ENCODE measurements at regions of chr3 and their contacts with region 1.

Region 1: DNA sequence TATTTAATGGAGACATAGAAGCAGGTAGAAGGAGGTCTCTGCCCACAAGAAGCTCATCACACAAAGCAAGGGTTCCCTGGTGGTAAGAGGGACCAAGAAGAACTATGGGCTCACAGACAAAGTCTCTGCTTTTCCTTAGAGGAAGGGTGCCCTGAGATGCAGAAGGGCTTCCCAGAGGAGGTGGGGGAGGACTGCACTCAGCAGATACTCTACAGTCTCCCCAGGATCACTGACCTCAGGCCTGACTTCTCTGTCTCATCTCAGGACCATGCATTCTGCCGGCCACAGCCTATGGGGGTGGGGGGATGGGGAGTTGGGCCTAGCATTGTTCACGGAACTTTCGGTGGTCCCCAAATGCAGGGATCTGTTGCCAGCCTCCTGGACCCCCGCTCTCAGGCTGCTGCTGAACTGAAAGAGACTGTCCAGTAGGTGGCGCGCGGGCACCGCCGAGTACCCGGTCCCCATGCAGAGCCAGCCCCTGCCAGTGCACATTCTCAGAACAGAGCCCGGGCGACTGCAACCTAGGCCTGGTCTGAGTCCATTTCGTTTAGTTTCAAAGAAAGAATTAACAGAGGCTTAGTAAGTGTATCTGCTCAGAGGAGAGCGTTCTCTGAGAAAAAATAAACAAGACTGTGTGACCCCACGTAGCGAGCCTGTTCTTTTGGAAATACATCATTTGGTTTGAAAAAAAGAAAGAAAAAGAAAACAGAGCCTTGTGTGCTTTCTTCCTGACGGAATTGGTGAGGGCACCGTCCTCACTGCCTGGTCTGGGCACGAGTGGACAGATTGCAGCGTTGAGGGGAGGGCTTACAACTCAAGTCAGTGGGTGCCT is 74.1 kb downstream of the LRTM1 start:
- DNase-seq: peak; percentile 25 to 70
- ATAC-seq: peak; percentile 91 to 98
- H3K4me3 ChIP-seq: no peak overlapping the region
- H3K27ac ChIP-seq: no peak overlapping the region
- H3K4me1 ChIP-seq: no peaks in the 10 kb centered on the region
- CTCF ChIP-seq: peak; percentile 65
- EP300 ChIP-seq: no peak
- POLR2A ChIP-seq: no peak
- RAD21 ChIP-seq: peak; percentile 81 to 86

Region 2: DNA sequence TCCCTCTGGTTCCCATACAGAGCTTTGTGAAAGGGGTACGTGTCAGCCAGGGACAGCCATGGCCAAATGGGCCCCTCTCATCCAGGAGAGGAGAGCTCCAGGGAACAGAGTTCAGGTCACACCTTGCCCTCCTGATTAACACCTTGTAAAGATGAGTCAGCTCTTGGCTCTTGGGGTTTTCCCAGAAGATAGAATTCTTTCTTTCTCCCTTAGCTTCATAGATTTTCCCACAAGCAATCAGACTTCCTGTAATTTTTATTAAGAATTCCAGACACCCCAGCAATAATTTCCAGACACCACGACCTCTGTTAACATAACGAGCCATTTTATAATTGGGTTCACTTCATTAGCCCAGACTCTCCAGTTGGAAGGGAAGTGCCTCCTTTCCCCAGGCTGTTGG is 12.3 kb before region 1 on chr3:
- CTCF ChIA-PET with region 1: interaction called, 10 read pairs
- POLR2A ChIA-PET with region 1: no interaction called
- DNase-seq: no peak
- ATAC-seq: no peak
- H3K4me3 ChIP-seq: no peak overlapping the region
- H3K27ac ChIP-seq: no peak overlapping the region
- H3K4me1 ChIP-seq: no peaks in the 10 kb centered on the region
- CTCF ChIP-seq: no peak
- EP300 ChIP-seq: no peak
- POLR2A ChIP-seq: no peak
- RAD21 ChIP-seq: no peak

Region 3: DNA sequence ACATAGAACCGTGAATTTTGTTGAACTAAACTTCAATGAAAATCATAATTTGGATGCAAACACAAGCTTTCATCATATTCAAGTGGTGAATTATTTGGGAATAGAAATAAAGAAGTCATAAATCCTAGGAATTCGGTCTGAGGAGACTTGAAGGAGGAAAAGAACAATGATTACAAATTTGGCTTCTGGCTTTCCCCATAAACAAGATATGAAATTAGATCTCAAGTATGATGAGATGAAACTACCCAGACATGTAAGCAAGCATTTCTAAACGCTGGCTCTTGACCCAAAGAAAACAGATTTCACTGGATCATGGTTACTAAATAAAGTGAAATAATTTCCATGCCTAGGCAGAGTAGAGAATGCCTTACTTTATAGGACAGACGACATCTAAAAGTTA is 221.0 kb after region 1 on chr3:
- CTCF ChIA-PET with region 1: no interaction called
- POLR2A ChIA-PET with region 1: no interaction called
- DNase-seq: no peak
- ATAC-seq: no peak
- H3K4me3 ChIP-seq: no peak overlapping the region
- H3K27ac ChIP-seq: no peak overlapping the region
- H3K4me1 ChIP-seq: no peaks in the 10 kb centered on the region
- CTCF ChIP-seq: no peak
- EP300 ChIP-seq: no peak
- POLR2A ChIP-seq: no peak
- RAD21 ChIP-seq: no peak

Region 4: DNA sequence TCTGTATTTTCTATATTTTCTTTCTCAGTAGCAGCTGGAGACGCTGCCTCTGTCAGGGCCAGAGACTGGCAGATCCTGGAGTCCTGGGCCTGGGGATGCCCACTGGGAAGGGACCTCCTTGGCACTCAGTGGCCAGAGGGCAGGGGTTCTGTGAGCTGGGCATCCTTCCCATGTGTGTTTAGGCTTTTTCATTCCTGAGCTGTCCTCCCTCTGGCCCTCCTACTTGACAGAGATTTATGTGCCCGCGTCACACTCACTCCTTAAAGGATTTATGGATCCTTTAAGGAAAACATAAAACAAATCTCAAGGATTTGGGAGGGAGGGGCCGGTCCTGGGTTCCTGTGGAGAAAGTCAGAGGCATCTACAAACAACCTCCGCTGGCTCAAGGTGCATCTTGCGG is 515.7 kb after region 1 on chr3:
- CTCF ChIA-PET with region 1: no interaction called
- POLR2A ChIA-PET with region 1: no interaction called
- DNase-seq: no peak
- ATAC-seq: no peak
- H3K4me3 ChIP-seq: no peak overlapping the region
- H3K27ac ChIP-seq: no peak overlapping the region
- H3K4me1 ChIP-seq: no peaks in the 10 kb centered on the region
- CTCF ChIP-seq: no peak
- EP300 ChIP-seq: no peak
- POLR2A ChIP-seq: no peak
- RAD21 ChIP-seq: no peak

Measured in A549 (cell line).